CD8-positive, alpha-beta T cell (primary cell): ENCODE measurements at regions of chr10 and their contacts with region 1.

Region 1: DNA sequence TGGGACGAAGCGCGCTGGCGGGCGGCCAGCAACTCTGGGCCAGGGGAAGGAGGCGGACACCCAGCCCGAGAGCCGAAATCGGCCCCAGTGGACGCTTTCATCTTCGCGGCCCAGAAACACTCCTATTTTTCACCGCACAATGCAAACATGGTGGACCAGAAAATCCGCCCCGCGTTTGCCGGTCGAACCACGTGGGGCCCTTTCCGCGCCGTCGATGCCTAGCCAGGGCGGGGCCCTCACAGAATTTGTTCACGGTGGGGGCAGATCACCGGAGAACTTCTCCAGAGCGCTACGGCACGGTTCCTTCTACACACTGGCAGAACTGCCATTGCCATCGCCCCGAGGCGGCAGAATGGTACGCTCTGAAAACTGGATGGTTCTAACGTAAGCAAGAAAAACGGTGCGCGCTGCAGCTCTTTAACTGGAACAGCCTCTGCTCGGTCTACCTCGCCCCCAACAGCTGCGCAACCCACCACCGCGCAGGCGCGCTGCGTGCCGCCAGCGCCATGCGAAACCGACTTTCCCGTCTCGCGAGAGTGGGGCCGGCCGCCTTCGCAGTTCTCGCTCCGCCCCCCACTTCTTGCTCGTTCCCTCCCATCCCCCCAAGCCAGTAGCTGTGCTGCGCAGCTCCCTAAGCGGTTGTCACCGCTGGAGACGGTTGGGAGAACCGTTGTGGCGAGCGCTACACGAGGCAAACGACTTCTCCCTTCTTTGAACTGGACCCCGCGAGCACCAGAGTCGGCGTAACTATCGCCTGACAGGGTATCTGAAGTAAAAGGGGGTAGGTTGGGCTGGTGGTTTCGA is at the start of gene HNRNPH3:
- DNase-seq: peak; percentile 98 to 100 (median 99)
- ATAC-seq: peak; percentile 82
- H3K4me3 ChIP-seq: peak within 1 kb of the TSS; percentile 75 to 83
- H3K4me3 Mint-ChIP-seq: peak within 1 kb of the TSS; percentile 100
- H3K27ac ChIP-seq: peak within 1 kb of the TSS; percentile 86 to 99
- H3K27ac Mint-ChIP-seq: peak within 1 kb of the TSS; percentile 100
- H3K4me1 ChIP-seq: peaks cover 28% of the 10 kb centered on the region
- H3K4me1 Mint-ChIP-seq: peaks cover 44% of the 10 kb centered on the region
- H3K27me3 ChIP-seq: no peaks in the 10 kb centered on the region
- H3K27me3 Mint-ChIP-seq: no peaks in the 10 kb centered on the region
- CTCF ChIP-seq: no peak
- total RNA-seq, gene HNRNPH3: 242 to 255 TPM

Region 2: DNA sequence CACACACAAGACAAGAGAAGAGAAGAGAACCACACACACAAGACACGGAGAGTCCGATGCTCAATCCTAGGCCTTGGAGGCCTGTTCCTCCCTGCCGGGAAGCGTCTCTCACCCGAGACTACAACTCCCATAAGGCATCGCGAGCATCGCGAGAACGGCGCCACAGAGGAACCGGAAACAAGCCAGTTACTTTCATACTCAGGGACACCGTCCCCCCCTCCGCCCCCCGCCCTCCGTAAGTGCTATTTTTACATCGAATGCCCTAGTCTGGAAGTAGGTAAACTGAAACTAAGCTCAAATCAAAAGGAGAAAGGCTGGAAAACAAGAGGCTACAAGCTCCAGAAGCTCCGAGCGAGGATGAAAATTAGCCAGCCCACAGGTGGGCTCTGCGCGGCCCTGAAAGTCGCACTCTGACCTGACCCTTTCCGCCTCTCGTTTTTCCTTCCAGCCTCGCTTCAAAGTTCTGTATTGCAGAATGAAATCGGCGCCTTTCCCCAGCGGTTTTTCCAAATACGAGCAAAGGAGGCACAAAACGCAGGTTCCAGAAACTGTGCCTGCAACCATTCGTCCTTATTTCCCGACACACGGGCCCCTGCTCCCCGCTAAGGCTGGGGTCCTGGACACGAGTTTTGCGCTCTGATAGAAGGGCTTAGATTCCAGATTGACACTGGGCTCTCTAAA is 482.2 kb before region 1 on chr10:
- CTCF ChIA-PET with region 1: no interaction called
- POLR2A ChIA-PET with region 1: interaction called, 8 read pairs
- intact Hi-C with region 1: loop called (anchors 1 to 5 kb)
- DNase-seq: peak; percentile 86 to 96 (median 93)
- ATAC-seq: peak; percentile 99
- H3K4me3 ChIP-seq: peak overlapping the region; percentile 61 to 97
- H3K4me3 Mint-ChIP-seq: peak overlapping the region; percentile 94
- H3K27ac ChIP-seq: peak overlapping the region; percentile 64 to 96
- H3K27ac Mint-ChIP-seq: peak overlapping the region; percentile 96
- H3K4me1 ChIP-seq: peaks cover 5% of the 10 kb centered on the region
- H3K4me1 Mint-ChIP-seq: peaks cover 10% of the 10 kb centered on the region
- H3K27me3 ChIP-seq: no peaks in the 10 kb centered on the region
- H3K27me3 Mint-ChIP-seq: no peaks in the 10 kb centered on the region
- CTCF ChIP-seq: no peak

Region 3: DNA sequence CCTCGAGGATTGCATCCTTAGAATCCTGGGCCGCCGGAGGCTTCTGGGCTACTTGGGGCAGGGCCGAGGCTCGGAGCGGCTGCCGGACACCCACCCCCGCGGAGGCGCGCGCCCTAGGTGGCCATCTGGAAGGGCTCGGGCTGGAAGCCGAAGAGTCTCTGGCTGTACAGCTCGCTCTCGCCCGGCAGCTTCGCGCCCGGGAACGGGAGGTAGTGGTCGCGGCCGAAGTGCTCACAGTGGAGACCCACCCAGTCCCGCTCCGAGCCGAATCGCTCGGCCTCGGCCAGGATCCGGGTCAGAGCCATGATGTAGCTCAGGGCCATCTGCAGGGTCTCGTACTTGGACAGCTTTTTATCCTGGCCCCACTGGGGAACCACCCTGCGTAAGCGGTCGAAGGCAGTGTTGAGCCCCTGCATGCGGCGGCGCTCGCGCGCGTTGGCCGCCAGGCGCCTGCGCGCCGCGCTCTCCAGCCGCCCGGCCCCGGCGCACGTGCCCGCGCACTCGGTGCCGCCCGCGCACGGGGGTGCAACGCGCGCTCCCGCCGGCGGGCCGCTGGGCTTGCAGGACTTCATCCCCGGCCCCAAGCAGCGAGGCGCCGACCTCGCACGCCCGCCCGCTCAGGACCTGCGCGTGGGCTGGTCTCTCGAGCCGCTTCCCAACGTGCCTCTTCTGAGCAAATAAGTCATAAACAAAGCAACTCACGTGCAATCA is 100.4 kb before region 1 on chr10:
- CTCF ChIA-PET with region 1: no interaction called
- POLR2A ChIA-PET with region 1: interaction called, 4 read pairs
- intact Hi-C with region 1: loop called in 1 of 2 experiments (anchors 2 kb)
- DNase-seq: peak in 7 of 9 experiments; percentile 1 to 54 (median 13)
- ATAC-seq: peak; percentile 48
- H3K4me3 ChIP-seq: peak overlapping the region; percentile 42 to 65
- H3K4me3 Mint-ChIP-seq: peak overlapping the region; percentile 78
- H3K27ac ChIP-seq: no peak overlapping the region
- H3K27ac Mint-ChIP-seq: no peak overlapping the region
- H3K4me1 ChIP-seq: peaks cover 5% of the 10 kb centered on the region
- H3K4me1 Mint-ChIP-seq: peaks cover 9% of the 10 kb centered on the region
- H3K27me3 ChIP-seq: peaks cover 7 to 12% of the 10 kb centered on the region in 2 experiments
- H3K27me3 Mint-ChIP-seq: peaks cover 39% of the 10 kb centered on the region
- CTCF ChIP-seq: no peak

Region 4: GRCh38 chr10:68397005-68397404 is 65.3 kb after region 1 on chr10:
- CTCF ChIA-PET with region 1: no interaction called
- POLR2A ChIA-PET with region 1: no interaction called
- intact Hi-C with region 1: loop called in 1 of 2 experiments (anchors 5 kb)
- DNase-seq: no peak
- ATAC-seq: no peak
- H3K4me3 ChIP-seq: no peak overlapping the region
- H3K4me3 Mint-ChIP-seq: no peak overlapping the region
- H3K27ac ChIP-seq: no peak overlapping the region
- H3K27ac Mint-ChIP-seq: no peak overlapping the region
- H3K4me1 ChIP-seq: no peaks in the 10 kb centered on the region
- H3K4me1 Mint-ChIP-seq: no peaks in the 10 kb centered on the region
- H3K27me3 ChIP-seq: no peaks in the 10 kb centered on the region
- H3K27me3 Mint-ChIP-seq: no peaks in the 10 kb centered on the region
- CTCF ChIP-seq: no peak

Region 5: GRCh38 chr10:68526626-68527307 is 195.1 kb after region 1 on chr10:
- CTCF ChIA-PET with region 1: no interaction called
- POLR2A ChIA-PET with region 1: no interaction called
- intact Hi-C with region 1: loop called (anchors 2 to 5 kb)
- DNase-seq: no peak
- ATAC-seq: no peak
- H3K4me3 ChIP-seq: peak overlapping the region; percentile 74 to 96
- H3K4me3 Mint-ChIP-seq: peak overlapping the region; percentile 92
- H3K27ac ChIP-seq: peak overlapping the region; percentile 91
- H3K27ac Mint-ChIP-seq: peak overlapping the region; percentile 96
- H3K4me1 ChIP-seq: peaks cover 6% of the 10 kb centered on the region
- H3K4me1 Mint-ChIP-seq: peaks cover 8% of the 10 kb centered on the region
- H3K27me3 ChIP-seq: no peaks in the 10 kb centered on the region
- H3K27me3 Mint-ChIP-seq: no peaks in the 10 kb centered on the region
- CTCF ChIP-seq: no peak

Region 6: DNA sequence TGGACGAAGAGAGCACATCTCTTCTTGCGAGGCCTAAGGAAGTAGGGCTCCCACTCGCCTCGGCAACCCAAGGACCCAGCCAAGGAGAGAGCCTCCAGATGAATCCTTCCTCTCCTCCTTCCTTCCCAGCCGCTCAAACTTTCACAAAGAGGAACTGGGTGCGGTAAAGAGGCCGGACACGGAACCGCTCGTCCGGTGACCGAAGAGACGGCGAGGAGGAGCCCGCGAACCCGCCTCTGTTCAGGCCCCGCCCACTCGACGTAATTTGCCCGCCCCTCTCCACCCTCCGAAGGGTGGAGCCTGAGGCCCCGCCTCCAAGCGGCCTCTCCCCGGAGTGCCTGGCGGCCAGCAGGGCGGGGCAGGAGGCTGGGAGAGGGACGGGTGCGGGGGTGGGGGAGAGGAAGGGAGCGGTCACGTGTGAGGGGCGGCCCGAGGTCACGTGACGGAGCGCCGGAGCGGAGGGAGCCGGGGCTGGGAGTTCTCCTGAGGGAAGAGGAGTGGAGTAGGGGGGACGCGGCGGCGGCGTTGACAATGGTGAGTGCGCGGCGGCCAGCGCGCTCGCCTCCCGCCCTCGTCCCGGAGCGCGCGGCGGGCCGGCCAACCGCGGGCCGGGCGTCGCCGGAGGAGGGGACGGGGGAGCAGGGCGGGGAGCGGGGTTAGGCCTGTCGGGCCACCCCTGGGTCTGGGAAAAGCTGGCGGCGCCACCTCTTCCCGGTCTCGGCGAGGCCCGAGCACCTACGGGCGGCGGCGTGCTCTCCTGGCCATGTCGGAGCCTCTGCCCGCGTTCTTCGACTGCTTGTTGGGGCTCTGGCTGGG is 792.3 kb after region 1 on chr10 and contains the start of gene VPS26A:
- CTCF ChIA-PET with region 1: no interaction called
- POLR2A ChIA-PET with region 1: no interaction called
- intact Hi-C with region 1: loop called in 1 of 2 experiments (anchors 5 kb)
- DNase-seq: peak; percentile 95 to 99 (median 98)
- ATAC-seq: peak; percentile 97
- H3K4me3 ChIP-seq: peak within 1 kb of the TSS; percentile 88 to 90
- H3K4me3 Mint-ChIP-seq: peak within 1 kb of the TSS; percentile 94
- H3K27ac ChIP-seq: peak within 1 kb of the TSS; percentile 94
- H3K27ac Mint-ChIP-seq: peak within 1 kb of the TSS; percentile 97
- H3K4me1 ChIP-seq: peaks cover 27% of the 10 kb centered on the region
- H3K4me1 Mint-ChIP-seq: peaks cover 30% of the 10 kb centered on the region
- H3K27me3 ChIP-seq: no peaks in the 10 kb centered on the region
- H3K27me3 Mint-ChIP-seq: no peaks in the 10 kb centered on the region
- CTCF ChIP-seq: peak; percentile 54
- total RNA-seq, gene VPS26A: 48.6 to 50.3 TPM